ENCODE measurements at regions of chr1 and their contacts with region 1.

Region 1: DNA sequence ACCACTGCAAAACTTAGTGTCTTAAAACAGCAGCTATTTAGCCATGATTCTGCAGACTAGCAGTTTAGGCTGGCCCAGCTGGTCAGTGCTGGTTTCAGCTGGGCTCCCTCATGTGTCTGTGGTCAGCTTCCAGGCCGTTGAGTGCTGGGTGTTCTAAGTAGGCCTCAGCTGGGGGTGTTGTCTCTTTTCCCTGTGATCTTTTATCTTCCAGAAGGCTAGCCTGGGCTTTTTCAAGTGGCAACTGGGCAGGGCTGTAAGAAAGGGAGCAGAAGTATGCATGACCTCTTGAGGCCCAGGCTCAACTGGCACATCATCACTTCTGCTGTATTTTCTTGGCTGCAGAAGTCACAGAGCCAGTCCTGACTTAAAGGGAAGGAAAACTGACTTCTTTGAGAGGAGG is 136.1 kb downstream of the KIF26B start:
- DNase-seq: no peak
- H3K4me3 ChIP-seq: no peak overlapping the region
- H3K4me3 Mint-ChIP-seq: no peak overlapping the region
- H3K27ac ChIP-seq: no peak overlapping the region
- H3K27ac Mint-ChIP-seq: no peak overlapping the region
- H3K4me1 ChIP-seq: peaks cover 11 to 20% of the 10 kb centered on the region in 2 donors
- H3K4me1 Mint-ChIP-seq: peaks cover 35% of the 10 kb centered on the region
- H3K27me3 ChIP-seq: peaks cover 28 to 53% of the 10 kb centered on the region in 2 donors
- H3K27me3 Mint-ChIP-seq: peaks cover 41 to 88% (median 55%) of the 10 kb centered on the region in 3 donors
- CTCF ChIP-seq: no peak

Region 2: DNA sequence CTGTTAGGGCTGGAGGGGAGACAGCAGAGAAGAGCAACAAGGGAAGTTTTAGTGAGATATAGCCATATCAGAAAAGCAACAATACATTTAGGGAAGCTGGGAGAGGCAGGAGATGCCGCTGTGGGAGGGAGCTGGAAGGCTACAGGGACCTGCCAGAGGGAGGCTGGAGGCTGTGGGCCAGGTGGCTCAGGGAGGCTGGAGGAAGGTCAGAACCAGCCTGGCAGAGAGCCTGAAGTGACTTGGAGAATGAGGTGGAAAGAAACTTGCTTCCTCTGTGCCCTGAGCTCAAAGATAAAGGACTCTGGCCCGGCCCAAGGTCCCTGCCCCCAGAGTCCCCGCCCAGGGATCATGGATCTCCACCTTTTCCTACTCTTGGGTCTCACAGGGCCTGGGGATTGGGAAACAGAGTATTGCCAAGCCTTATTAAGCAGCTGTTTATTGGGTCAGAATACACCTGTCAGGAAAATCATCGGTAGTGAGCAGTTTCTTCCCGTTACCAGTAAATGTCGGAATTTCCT is 50.1 kb before region 1 on chr1:
- intact Hi-C with region 1: loop called in 1 of 2 experiments (anchors 5 kb)
- DNase-seq: no peak
- H3K4me3 ChIP-seq: no peak overlapping the region
- H3K4me3 Mint-ChIP-seq: peak overlapping the region in 1 of 2 donors; percentile 59
- H3K27ac ChIP-seq: no peak overlapping the region
- H3K27ac Mint-ChIP-seq: no peak overlapping the region
- H3K4me1 ChIP-seq: no peaks in the 10 kb centered on the region
- H3K4me1 Mint-ChIP-seq: peaks cover 2% of the 10 kb centered on the region
- H3K27me3 ChIP-seq: peaks cover 61 to 89% of the 10 kb centered on the region in 2 donors
- H3K27me3 Mint-ChIP-seq: peaks cover 86 to 99% (median 92%) of the 10 kb centered on the region in 3 donors
- CTCF ChIP-seq: no peak

Measured in CD14-positive monocyte (primary cell).